ENCODE measurements at regions of chr2 and their contacts with region 1.

Region 1: GRCh38 chr2:46062637-46063412 is 234.4 kb upstream of the EPAS1 start:
- DNase-seq: peak; percentile 84
- ATAC-seq: peak; percentile 77
- H3K4me3 Mint-ChIP-seq: no peak overlapping the region
- H3K27ac Mint-ChIP-seq: no peak overlapping the region
- H3K4me1 Mint-ChIP-seq: peaks cover 10% of the 10 kb centered on the region
- H3K27me3 Mint-ChIP-seq: no peaks in the 10 kb centered on the region

Region 2: GRCh38 chr2:45962522-45962921 is 100.3 kb before region 1 on chr2:
- CTCF ChIA-PET with region 1: no interaction called
- POLR2A ChIA-PET with region 1: no interaction called
- DNase-seq: no peak
- ATAC-seq: no peak
- H3K4me3 Mint-ChIP-seq: no peak overlapping the region
- H3K27ac Mint-ChIP-seq: no peak overlapping the region
- H3K4me1 Mint-ChIP-seq: peaks cover 11% of the 10 kb centered on the region
- H3K27me3 Mint-ChIP-seq: no peaks in the 10 kb centered on the region

Region 3: GRCh38 chr2:46010925-46011490 is 51.8 kb before region 1 on chr2:
- CTCF ChIA-PET with region 1: interaction called, 13 read pairs
- POLR2A ChIA-PET with region 1: no interaction called
- DNase-seq: no peak
- ATAC-seq: peak; percentile 68
- H3K4me3 Mint-ChIP-seq: no peak overlapping the region
- H3K27ac Mint-ChIP-seq: no peak overlapping the region
- H3K4me1 Mint-ChIP-seq: peaks cover 14% of the 10 kb centered on the region
- H3K27me3 Mint-ChIP-seq: no peaks in the 10 kb centered on the region

Region 4: DNA sequence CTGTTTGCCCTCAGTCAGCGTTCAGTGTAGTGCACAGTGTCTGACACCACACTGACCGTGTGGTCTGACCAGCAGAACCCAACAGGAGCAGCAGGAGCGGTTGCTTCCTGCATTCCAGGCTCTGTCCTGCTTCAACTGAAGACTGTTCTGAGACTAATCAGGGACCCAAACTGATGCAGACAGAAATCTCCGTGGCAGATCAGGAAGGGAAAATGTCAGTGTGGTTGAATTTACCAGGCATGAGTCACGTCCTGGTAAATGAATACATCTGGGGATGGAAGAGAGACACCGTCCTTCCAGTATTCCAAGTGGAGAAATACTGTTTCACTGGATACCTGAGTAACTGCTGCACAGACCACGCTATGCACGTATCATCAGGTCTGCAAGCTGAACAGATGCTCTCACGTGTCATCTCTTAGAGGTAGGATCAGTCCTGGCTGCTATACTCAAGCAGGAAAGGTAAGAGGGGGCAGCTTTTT is 10.8 kb after region 1 on chr2:
- CTCF ChIA-PET with region 1: interaction called, 18 read pairs
- POLR2A ChIA-PET with region 1: no interaction called
- DNase-seq: no peak
- ATAC-seq: no peak
- H3K4me3 Mint-ChIP-seq: no peak overlapping the region
- H3K27ac Mint-ChIP-seq: no peak overlapping the region
- H3K4me1 Mint-ChIP-seq: peaks cover 5% of the 10 kb centered on the region
- H3K27me3 Mint-ChIP-seq: no peaks in the 10 kb centered on the region

Region 5: DNA sequence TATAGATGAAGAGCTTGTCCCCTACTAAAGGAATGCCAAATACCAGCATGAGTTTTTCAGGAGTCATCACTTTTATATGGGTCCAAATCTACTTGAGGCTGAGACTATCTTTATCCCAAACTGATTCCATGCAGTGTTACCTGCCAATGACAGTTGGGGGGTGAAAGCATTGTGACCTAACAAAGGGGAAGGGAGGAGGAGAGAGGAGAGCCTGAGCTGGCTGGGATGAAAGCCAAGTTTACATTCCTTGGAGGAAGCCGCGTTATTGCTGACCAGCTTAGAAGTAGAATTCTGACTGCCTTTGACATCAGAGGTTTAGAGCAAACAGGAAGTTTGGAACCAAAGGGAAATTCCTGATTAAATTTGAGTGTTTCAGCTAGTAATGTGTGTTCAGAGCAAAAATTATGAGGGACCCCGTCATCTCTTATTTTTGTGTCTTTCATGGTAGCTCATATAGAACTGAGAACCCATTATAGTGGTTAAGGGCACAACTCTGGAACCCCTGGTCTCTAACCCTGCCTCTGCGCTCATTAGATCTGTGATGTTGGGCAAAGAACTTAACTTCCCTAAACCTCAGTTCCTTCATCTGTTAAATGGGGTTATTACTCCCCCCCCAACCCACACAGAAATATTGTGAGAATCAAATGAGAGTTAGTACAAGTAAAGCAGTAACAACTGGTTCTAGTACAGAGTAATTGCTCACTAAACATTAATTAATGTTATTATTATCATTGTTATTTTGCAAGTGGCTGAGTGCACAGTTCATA is 35.1 kb after region 1 on chr2:
- CTCF ChIA-PET with region 1: interaction called, 10 read pairs
- POLR2A ChIA-PET with region 1: no interaction called
- DNase-seq: no peak
- ATAC-seq: no peak
- H3K4me3 Mint-ChIP-seq: no peak overlapping the region
- H3K27ac Mint-ChIP-seq: no peak overlapping the region
- H3K4me1 Mint-ChIP-seq: peaks cover 18% of the 10 kb centered on the region
- H3K27me3 Mint-ChIP-seq: no peaks in the 10 kb centered on the region

Region 6: DNA sequence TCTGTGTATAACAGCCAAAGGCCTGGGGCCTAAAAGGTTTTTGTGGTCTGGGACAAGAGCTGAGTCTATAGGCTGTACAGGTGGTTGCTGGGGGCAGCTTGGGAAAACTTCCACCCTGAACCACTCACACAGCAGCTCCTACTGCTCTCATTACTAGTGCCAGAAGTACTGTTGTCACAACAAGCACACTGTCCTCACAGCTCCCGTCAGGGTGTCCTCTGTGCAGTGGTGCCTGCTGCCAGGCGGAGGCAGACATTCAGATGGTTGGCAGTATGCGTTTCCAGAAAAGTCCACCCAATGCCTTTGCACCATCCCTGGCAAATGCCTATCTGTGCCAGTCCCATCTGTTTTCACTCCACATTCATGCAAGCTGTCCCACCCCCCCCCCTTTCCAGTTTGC is 292.9 kb after region 1 on chr2:
- CTCF ChIA-PET with region 1: interaction called, 11 read pairs
- POLR2A ChIA-PET with region 1: no interaction called
- DNase-seq: no peak
- ATAC-seq: no peak
- H3K4me3 Mint-ChIP-seq: no peak overlapping the region
- H3K27ac Mint-ChIP-seq: no peak overlapping the region
- H3K4me1 Mint-ChIP-seq: peaks cover 68% of the 10 kb centered on the region
- H3K27me3 Mint-ChIP-seq: no peaks in the 10 kb centered on the region

Measured in activated CD8-positive, alpha-beta T cell treated with anti-CD3 and anti-CD28 coated beads, Interleukin-2, amount 10 ng/mL, durations not matched to agents 7 days and 5 days (primary cell).